Endothelial cell of umbilical vein (primary cell): ENCODE measurements at regions of chr1 and their contacts with region 1.

Region 1: GRCh38 chr1:42924082-42924850 is 34.4 kb downstream of the SLC2A1 start:
- DNase-seq: peak; percentile 91
- H3K4me3 ChIP-seq: peak overlapping the region; percentile 63 to 87 (median 81)
- H3K27ac ChIP-seq: peak overlapping the region; percentile 75
- H3K4me1 ChIP-seq: peaks cover 10% of the 10 kb centered on the region
- H3K27me3 ChIP-seq: no peaks in the 10 kb centered on the region
- CTCF ChIP-seq: no peak
- POLR2A ChIP-seq: peak; percentile 85

Region 2: DNA sequence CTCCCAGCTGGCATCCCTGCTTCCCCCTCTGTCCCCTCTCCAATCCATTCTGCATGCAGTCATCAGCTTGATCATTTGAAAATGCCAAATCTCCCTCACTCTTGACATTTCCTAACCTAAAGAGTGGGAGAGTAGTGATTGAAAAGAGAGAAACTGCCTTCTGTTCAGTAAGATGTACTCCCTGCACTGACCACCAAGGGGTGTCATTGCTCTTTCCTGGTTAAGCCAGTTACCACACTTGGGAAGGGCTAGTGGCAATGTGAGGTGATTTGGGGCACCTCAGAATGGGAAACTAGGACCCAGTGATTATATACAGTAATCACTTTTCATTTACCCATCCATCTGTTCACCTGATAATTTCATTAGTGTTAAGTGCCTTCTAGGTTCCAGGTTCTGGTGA is 146.4 kb before region 1 on chr1:
- CTCF ChIA-PET with region 1: interaction called, 48 read pairs
- POLR2A ChIA-PET with region 1: no interaction called
- dilution Hi-C with region 1: no loop called
- intact Hi-C with region 1: no loop called
- DNase-seq: peak; percentile 54
- H3K4me3 ChIP-seq: no peak overlapping the region
- H3K27ac ChIP-seq: no peak overlapping the region
- H3K4me1 ChIP-seq: no peaks in the 10 kb centered on the region
- H3K27me3 ChIP-seq: no peaks in the 10 kb centered on the region
- CTCF ChIP-seq: peak; percentile 59 to 67
- POLR2A ChIP-seq: no peak

Region 3: GRCh38 chr1:42913426-42914091 is 10.7 kb before region 1 on chr1:
- CTCF ChIA-PET with region 1: interaction called, 91 read pairs
- POLR2A ChIA-PET with region 1: no interaction called
- dilution Hi-C with region 1: no loop called
- intact Hi-C with region 1: loop called (anchors 1 kb)
- DNase-seq: peak; percentile 85
- H3K4me3 ChIP-seq: no peak overlapping the region
- H3K27ac ChIP-seq: no peak overlapping the region
- H3K4me1 ChIP-seq: no peaks in the 10 kb centered on the region
- H3K27me3 ChIP-seq: peaks cover 4% of the 10 kb centered on the region in 2 experiments
- CTCF ChIP-seq: peak; percentile 62 to 75
- POLR2A ChIP-seq: no peak

Region 4: GRCh38 chr1:42941640-42942330 is 17.5 kb after region 1 on chr1:
- CTCF ChIA-PET with region 1: interaction called, 25 read pairs
- POLR2A ChIA-PET with region 1: no interaction called
- dilution Hi-C with region 1: no loop called
- intact Hi-C with region 1: loop called (anchors 1 kb)
- DNase-seq: peak; percentile 79
- H3K4me3 ChIP-seq: no peak overlapping the region
- H3K27ac ChIP-seq: peak overlapping the region; percentile 98
- H3K4me1 ChIP-seq: peaks cover 47% of the 10 kb centered on the region
- H3K27me3 ChIP-seq: no peaks in the 10 kb centered on the region
- CTCF ChIP-seq: no peak
- POLR2A ChIP-seq: no peak

Region 5: GRCh38 chr1:42958488-42959319 is 34.4 kb after region 1 on chr1 and contains the start of gene SLC2A1:
- CTCF ChIA-PET with region 1: interaction called, 12 read pairs
- POLR2A ChIA-PET with region 1: no interaction called
- dilution Hi-C with region 1: no loop called
- intact Hi-C with region 1: loop called (anchors 1 kb)
- DNase-seq: peak; percentile 94
- H3K4me3 ChIP-seq: peak within 1 kb of the TSS; percentile 43 to 79 (median 57)
- H3K27ac ChIP-seq: peak within 1 kb of the TSS; percentile 68
- H3K4me1 ChIP-seq: peaks cover 16% of the 10 kb centered on the region
- H3K27me3 ChIP-seq: no peaks in the 10 kb centered on the region
- CTCF ChIP-seq: no peak
- POLR2A ChIP-seq: peak; percentile 73
- total RNA-seq, gene SLC2A1: 38.7 and 42.2 TPM in 2 replicates

Region 6: GRCh38 chr1:42979896-42980800 is 55.9 kb after region 1 on chr1:
- CTCF ChIA-PET with region 1: interaction called, 11 read pairs
- POLR2A ChIA-PET with region 1: no interaction called
- dilution Hi-C with region 1: no loop called
- intact Hi-C with region 1: no loop called
- DNase-seq: no peak
- H3K4me3 ChIP-seq: no peak overlapping the region
- H3K27ac ChIP-seq: no peak overlapping the region
- H3K4me1 ChIP-seq: peaks cover 12% of the 10 kb centered on the region
- H3K27me3 ChIP-seq: no peaks in the 10 kb centered on the region
- CTCF ChIP-seq: no peak
- POLR2A ChIP-seq: no peak

Region 7: GRCh38 chr1:43067977-43068751 is 143.9 kb after region 1 on chr1:
- CTCF ChIA-PET with region 1: interaction called, 1,298 read pairs
- POLR2A ChIA-PET with region 1: no interaction called
- dilution Hi-C with region 1: loop called (anchors 25 kb)
- intact Hi-C with region 1: loop called (anchors 1 kb)
- DNase-seq: no peak
- H3K4me3 ChIP-seq: peak overlapping the region in 1 of 3 experiments; percentile 39
- H3K27ac ChIP-seq: no peak overlapping the region
- H3K4me1 ChIP-seq: no peaks in the 10 kb centered on the region
- H3K27me3 ChIP-seq: no peaks in the 10 kb centered on the region
- CTCF ChIP-seq: no peak
- POLR2A ChIP-seq: no peak